ENCODE measurements at regions of chr22 and their contacts with region 1.

Region 1: GRCh38 chr22:31749636-31750364 is at the start of gene PRR14L:
- DNase-seq: peak; percentile 99
- H3K4me3 ChIP-seq: peak within 1 kb of the TSS; percentile 78 to 98 (median 95)
- H3K27ac ChIP-seq: peak within 1 kb of the TSS; percentile 89 to 97 (median 91)
- H3K4me1 ChIP-seq: peaks cover 32 to 72% (median 56%) of the 10 kb centered on the region in 4 donors
- H3K27me3 ChIP-seq: no peaks in the 10 kb centered on the region
- CTCF ChIP-seq: no peak
- EP300 ChIP-seq: no peak
- POLR2A ChIP-seq: peak in 2 of 4 donors; percentile 21 to 69
- total RNA-seq, gene PRR14L: 24.0 to 193 (median 29.9) TPM

Region 2: DNA sequence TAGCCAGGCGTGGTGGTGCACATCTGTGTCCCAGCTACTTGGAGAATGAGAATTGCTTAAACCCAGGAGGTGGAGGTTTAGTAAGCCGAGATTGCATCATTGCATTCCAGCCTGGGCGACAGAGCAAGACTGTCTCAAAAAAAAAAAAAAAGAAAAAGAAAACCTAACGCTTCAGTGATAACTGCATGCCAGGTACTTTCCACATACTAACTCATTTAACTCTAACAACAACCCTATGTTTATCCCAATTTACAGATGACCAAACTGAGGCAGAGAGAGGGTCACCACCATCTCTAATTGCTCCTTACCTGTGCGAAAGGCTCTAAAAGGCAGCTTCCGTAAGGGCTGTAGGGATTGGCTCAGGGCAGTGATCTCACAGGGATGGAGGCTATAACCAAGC is 99.4 kb before region 1 on chr22:
- intact Hi-C with region 1: no loop called
- DNase-seq: no peak
- H3K4me3 ChIP-seq: no peak overlapping the region
- H3K27ac ChIP-seq: no peak overlapping the region
- H3K4me1 ChIP-seq: peaks cover 6 to 47% (median 16%) of the 10 kb centered on the region in 4 donors
- H3K27me3 ChIP-seq: no peaks in the 10 kb centered on the region
- CTCF ChIP-seq: no peak
- EP300 ChIP-seq: no peak
- POLR2A ChIP-seq: no peak

Region 3: DNA sequence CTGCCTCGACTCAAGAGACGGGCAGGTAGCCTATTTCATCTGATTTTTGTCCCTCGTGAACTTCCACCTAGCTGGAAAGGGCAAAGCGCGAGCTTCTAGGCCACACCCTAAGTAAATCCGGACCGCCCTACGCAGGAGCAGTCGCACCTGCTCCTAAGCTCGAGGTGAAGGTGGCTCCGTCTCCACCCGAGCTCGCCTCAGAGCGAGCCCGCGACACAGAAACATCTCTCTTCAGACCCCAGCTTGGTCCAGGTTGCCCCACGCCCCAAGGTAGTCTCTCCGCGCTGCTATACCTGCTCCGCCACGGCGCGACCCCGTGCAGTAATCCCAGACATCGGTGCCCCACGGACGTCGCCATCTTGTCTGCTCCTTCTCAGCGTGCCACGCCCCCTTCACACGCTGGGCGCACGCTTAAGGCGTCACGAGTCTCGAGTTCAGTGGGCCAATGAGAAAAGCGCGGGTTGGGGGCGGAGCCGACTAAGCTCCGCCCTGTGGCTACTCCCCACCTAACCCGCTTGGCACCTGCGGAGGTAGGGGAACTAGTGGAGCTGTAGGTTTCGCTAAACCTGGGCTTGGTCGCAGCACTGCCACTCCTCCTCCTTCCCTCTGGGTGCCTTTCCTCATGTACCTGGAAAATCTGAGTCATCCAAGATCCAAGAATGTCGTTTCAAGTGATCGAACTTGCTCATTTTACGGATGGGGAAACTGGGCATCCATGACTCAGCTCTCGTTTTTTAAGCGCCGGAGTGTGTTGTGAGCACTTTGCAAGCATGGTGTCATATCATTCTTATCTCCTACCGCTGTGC is 87.7 kb before region 1 on chr22 and contains the start of gene PISD:
- intact Hi-C with region 1: loop called (anchors 10 kb)
- DNase-seq: peak; percentile 98 to 99
- H3K4me3 ChIP-seq: peak within 1 kb of the TSS; percentile 75 to 99 (median 92)
- H3K27ac ChIP-seq: peak within 1 kb of the TSS; percentile 82 to 89 (median 84)
- H3K4me1 ChIP-seq: peaks cover 17 to 38% (median 24%) of the 10 kb centered on the region in 4 donors
- H3K27me3 ChIP-seq: no peaks in the 10 kb centered on the region
- CTCF ChIP-seq: no peak
- EP300 ChIP-seq: no peak
- POLR2A ChIP-seq: peak in 1 of 4 donors; percentile 61
- total RNA-seq, gene PISD: 10.3 to 99.8 (median 56.2) TPM

Region 4: GRCh38 chr22:31857247-31857646 is 107.4 kb after region 1 on chr22:
- intact Hi-C with region 1: no loop called
- DNase-seq: peak in 1 of 2 donors; percentile 89
- H3K4me3 ChIP-seq: no peak overlapping the region
- H3K27ac ChIP-seq: no peak overlapping the region
- H3K4me1 ChIP-seq: no peaks in the 10 kb centered on the region
- H3K27me3 ChIP-seq: no peaks in the 10 kb centered on the region
- CTCF ChIP-seq: no peak
- EP300 ChIP-seq: no peak
- POLR2A ChIP-seq: no peak

Region 5: GRCh38 chr22:31872209-31872608 is 122.4 kb after region 1 on chr22:
- intact Hi-C with region 1: no loop called
- DNase-seq: peak; percentile 34 to 61
- H3K4me3 ChIP-seq: no peak overlapping the region
- H3K27ac ChIP-seq: no peak overlapping the region
- H3K4me1 ChIP-seq: peaks cover 0 to 12% (median 0%) of the 10 kb centered on the region in 4 donors
- H3K27me3 ChIP-seq: no peaks in the 10 kb centered on the region
- CTCF ChIP-seq: peak in 3 of 7 experiments; percentile 6 to 31 (median 11)
- EP300 ChIP-seq: no peak
- POLR2A ChIP-seq: no peak